ENCODE measurements at regions of chr3 and their contacts with region 1.

Region 1: GRCh38 chr3:100590114-100590839 is 19.1 kb upstream of the ADGRG7 start:
- DNase-seq: peak; percentile 68
- H3K4me3 ChIP-seq: no peak overlapping the region
- H3K27ac ChIP-seq: no peak overlapping the region
- H3K4me1 ChIP-seq: no peaks in the 10 kb centered on the region
- CTCF ChIP-seq: peak; percentile 95

Region 2: DNA sequence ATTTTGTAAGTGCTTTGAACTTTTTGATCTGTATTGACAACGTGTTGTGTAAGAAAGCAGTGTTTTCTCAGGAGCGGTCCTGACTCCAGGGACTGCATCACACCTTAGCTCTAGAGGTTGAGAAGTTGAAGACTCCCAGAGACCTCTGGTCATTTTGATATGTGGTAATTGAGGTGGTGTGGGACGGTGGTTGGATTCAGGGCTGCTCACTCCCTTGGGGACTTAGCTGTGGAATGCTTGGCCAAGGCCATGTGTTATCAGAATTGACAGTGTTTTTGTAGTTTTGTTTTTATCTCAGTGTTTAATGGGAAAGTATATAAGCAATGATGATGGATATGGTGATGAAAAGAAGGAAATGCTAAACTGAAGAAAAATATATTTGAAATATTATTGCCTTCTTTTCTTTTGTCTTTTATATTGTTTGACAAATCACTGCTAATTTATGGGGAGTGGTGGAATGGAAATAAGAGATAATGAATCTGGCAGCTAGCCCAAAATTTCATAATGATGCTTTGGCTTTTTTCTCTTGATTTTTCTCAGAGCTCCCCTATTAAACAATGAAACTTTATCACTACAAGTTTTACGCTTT is 756.6 kb before region 1 on chr3:
- CTCF ChIA-PET with region 1: no interaction called
- POLR2A ChIA-PET with region 1: no interaction called
- intact Hi-C with region 1: loop called (anchors 5 kb)
- DNase-seq: no peak
- H3K4me3 ChIP-seq: no peak overlapping the region
- H3K27ac ChIP-seq: no peak overlapping the region
- H3K4me1 ChIP-seq: no peaks in the 10 kb centered on the region
- CTCF ChIP-seq: no peak

Region 3: GRCh38 chr3:99859825-99860224 is 730.5 kb before region 1 on chr3:
- CTCF ChIA-PET with region 1: no interaction called
- POLR2A ChIA-PET with region 1: no interaction called
- intact Hi-C with region 1: no loop called
- DNase-seq: no peak
- H3K4me3 ChIP-seq: no peak overlapping the region
- H3K27ac ChIP-seq: no peak overlapping the region
- H3K4me1 ChIP-seq: no peaks in the 10 kb centered on the region
- CTCF ChIP-seq: no peak

Region 4: GRCh38 chr3:100068826-100069225 is 521.5 kb before region 1 on chr3:
- CTCF ChIA-PET with region 1: no interaction called
- POLR2A ChIA-PET with region 1: no interaction called
- intact Hi-C with region 1: loop called (anchors 10 kb)
- DNase-seq: peak; percentile 69
- H3K4me3 ChIP-seq: no peak overlapping the region
- H3K27ac ChIP-seq: no peak overlapping the region
- H3K4me1 ChIP-seq: peaks cover 4% of the 10 kb centered on the region
- CTCF ChIP-seq: peak; percentile 84

Region 5: DNA sequence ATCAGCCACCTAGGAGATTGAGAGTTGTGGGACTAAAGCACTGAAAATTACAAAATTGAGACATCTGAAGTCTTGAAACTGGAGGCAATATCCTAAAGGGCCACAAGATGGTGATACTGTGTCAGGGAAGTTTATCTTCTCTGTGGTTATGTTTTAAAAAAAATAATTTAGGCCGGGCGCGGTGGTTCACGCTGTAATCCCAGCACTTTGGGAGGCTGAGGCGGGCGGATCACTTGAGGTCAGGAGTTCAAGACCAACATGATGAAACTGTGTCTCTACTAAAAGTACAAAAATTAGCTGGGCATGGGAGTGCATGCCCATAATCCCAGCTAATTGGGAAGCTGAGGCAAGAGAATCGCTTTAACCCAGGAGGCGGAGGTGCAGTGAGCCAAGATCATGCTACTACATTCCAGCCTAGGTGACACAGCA is 273.6 kb before region 1 on chr3:
- CTCF ChIA-PET with region 1: no interaction called
- POLR2A ChIA-PET with region 1: interaction called, 3 read pairs
- intact Hi-C with region 1: loop called (anchors 1 kb)
- DNase-seq: peak; percentile 64
- H3K4me3 ChIP-seq: no peak overlapping the region
- H3K27ac ChIP-seq: no peak overlapping the region
- H3K4me1 ChIP-seq: no peaks in the 10 kb centered on the region
- CTCF ChIP-seq: peak; percentile 83

Region 6: GRCh38 chr3:100463002-100463401 is 127.3 kb before region 1 on chr3:
- CTCF ChIA-PET with region 1: no interaction called
- POLR2A ChIA-PET with region 1: no interaction called
- intact Hi-C with region 1: loop called (anchors 1 kb)
- DNase-seq: peak; percentile 49
- H3K4me3 ChIP-seq: no peak overlapping the region
- H3K27ac ChIP-seq: no peak overlapping the region
- H3K4me1 ChIP-seq: no peaks in the 10 kb centered on the region
- CTCF ChIP-seq: peak; percentile 80

Region 7: GRCh38 chr3:100556656-100557310 is 33.5 kb before region 1 on chr3:
- CTCF ChIA-PET with region 1: no interaction called
- POLR2A ChIA-PET with region 1: no interaction called
- intact Hi-C with region 1: no loop called
- DNase-seq: no peak
- H3K4me3 ChIP-seq: no peak overlapping the region
- H3K27ac ChIP-seq: no peak overlapping the region
- H3K4me1 ChIP-seq: no peaks in the 10 kb centered on the region
- CTCF ChIP-seq: no peak